K562 (cell line): ENCODE measurements at regions of chr7 and their contacts with region 1.

Region 1: DNA sequence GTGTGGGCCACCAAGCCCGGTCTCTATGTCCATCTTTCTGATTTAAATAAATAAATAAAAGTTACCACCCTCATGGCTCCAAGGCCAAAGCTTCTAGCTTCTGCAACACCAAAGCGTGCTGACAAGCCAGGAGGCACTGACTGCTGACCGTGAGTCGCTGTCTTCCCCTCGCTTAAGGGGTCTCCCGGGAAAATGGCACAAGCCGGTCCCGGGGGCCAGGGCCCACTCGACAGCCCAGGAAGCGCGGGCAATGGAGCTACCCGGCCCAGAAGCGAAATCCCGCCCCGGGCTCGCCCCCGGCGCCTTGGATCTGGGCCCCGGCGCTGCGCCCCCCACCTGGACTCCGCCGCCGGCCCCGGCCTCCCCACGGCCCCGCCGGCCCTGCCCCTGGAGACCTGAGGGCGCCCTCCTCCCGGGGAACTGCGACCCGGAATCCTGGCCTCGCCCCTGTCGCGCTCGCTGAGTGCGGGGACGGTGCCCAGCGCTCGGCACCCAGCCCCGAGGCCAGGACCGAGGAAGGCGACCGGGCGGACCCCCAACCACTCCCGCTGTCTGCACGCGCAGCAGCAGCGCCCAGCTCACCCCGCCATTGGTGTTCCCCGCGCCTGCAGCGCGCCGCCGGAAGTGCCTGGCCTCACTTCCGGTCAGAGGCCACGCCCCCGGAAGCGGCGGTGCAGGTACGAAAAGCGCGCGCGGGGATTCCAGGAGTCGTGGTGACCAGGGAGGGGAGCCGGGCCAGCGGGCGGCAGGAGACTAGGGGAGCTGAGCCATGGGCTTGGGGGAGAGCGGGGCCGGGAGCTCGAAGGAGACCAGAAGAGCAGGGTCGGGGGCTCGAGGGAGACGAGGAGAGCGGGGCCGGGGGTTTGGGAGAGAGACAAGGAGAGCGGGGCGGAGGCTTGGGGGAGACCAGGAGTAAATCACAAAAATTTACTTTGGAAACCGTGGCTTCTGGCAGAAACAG is at the starts of genes MRM2 and NUDT1:
- DNase-seq: peak; percentile 89 to 93 (median 90)
- ATAC-seq: peak; percentile 95
- H3K4me3 ChIP-seq: peak within 1 kb of the TSS; percentile 100
- H3K27ac ChIP-seq: peak within 1 kb of the TSS; percentile 79
- H3K4me1 ChIP-seq: peaks cover 8 to 48% of the 10 kb centered on the region in 2 experiments; a peak in 3 of 5 replicates
- H3K27me3 ChIP-seq: no peaks in the 10 kb centered on the region
- CTCF ChIP-seq: no peak
- EP300 ChIP-seq: no peak; the same call in 1 of the 2 replicates
- POLR2A ChIP-seq: peak; percentile 91
- RAD21 ChIP-seq: no peak
- polyA plus RNA-seq, gene MRM2: 70.4 to 116 TPM
- polyA plus RNA-seq, gene NUDT1: 5.3 to 16.2 TPM

Region 2: GRCh38 chr7:2257046-2257551 is 15.2 kb after region 1 on chr7:
- CTCF ChIA-PET with region 1: no interaction called
- POLR2A ChIA-PET with region 1: no interaction called
- in situ Hi-C with region 1: no loop called
- intact Hi-C with region 1: no loop called
- DNase-seq: no peak
- ATAC-seq: no peak
- H3K4me3 ChIP-seq: no peak overlapping the region
- H3K27ac ChIP-seq: no peak overlapping the region
- H3K4me1 ChIP-seq: peaks cover 0 to 25% of the 10 kb centered on the region in 2 experiments; a peak in 1 of 5 replicates
- H3K27me3 ChIP-seq: no peaks in the 10 kb centered on the region
- CTCF ChIP-seq: no peak
- EP300 ChIP-seq: no peak
- POLR2A ChIP-seq: no peak
- RAD21 ChIP-seq: no peak

Region 3: GRCh38 chr7:2299870-2300512 is 58.1 kb after region 1 on chr7:
- CTCF ChIA-PET with region 1: no interaction called
- POLR2A ChIA-PET with region 1: interaction called, 3 read pairs
- in situ Hi-C with region 1: no loop called
- intact Hi-C with region 1: loop called (anchors 5 kb)
- DNase-seq: no peak
- ATAC-seq: no peak
- H3K4me3 ChIP-seq: no peak overlapping the region
- H3K27ac ChIP-seq: peak overlapping the region; percentile 81
- H3K4me1 ChIP-seq: peaks cover 28 to 50% of the 10 kb centered on the region in 2 experiments; a peak in 4 of 5 replicates
- H3K27me3 ChIP-seq: no peaks in the 10 kb centered on the region
- CTCF ChIP-seq: no peak
- EP300 ChIP-seq: no peak
- POLR2A ChIP-seq: no peak
- RAD21 ChIP-seq: no peak